ENCODE measurements at regions of chr6 and their contacts with region 1.

Region 1: GRCh38 chr6:42547407-42548329 is 16.2 kb upstream of the UBR2 start:
- DNase-seq: peak; percentile 82 to 92 (median 84)
- ATAC-seq: peak; percentile 94 to 99 (median 99)
- H3K4me3 ChIP-seq: peak overlapping the region; percentile 13 to 76 (median 53)
- H3K27ac ChIP-seq: peak overlapping the region in 9 of 12 donors; percentile 31 to 73 (median 45)
- H3K4me1 ChIP-seq: peaks cover 0 to 14% (median 4%) of the 10 kb centered on the region in 12 donors
- H3K27me3 ChIP-seq: peaks cover 0 to 4% (median 0%) of the 10 kb centered on the region in 9 donors
- CTCF ChIP-seq: peak; percentile 96 to 100 (median 99)
- POLR2A ChIP-seq: peak in 1 of 2 donors; percentile 24

Region 2: GRCh38 chr6:42086046-42087035 is 461.3 kb before region 1 on chr6:
- intact Hi-C with region 1: loop called in 1 of 10 experiments (anchors 10 kb)
- DNase-seq: peak in 1 of 5 donors; percentile 54
- ATAC-seq: peak; percentile 43 to 63 (median 54)
- H3K4me3 ChIP-seq: no peak overlapping the region
- H3K27ac ChIP-seq: peak overlapping the region; percentile 26 to 93 (median 84)
- H3K4me1 ChIP-seq: peaks cover 0 to 43% (median 13%) of the 10 kb centered on the region in 12 donors
- H3K27me3 ChIP-seq: no peaks in the 10 kb centered on the region
- CTCF ChIP-seq: peak in 4 of 12 donors; percentile 12 to 36 (median 18)
- POLR2A ChIP-seq: no peak

Region 3: GRCh38 chr6:42217519-42218367 is 329.9 kb before region 1 on chr6 and contains the start of gene MRPS10:
- intact Hi-C with region 1: loop called in 3 of 10 experiments (anchors 5 to 10 kb)
- DNase-seq: peak; percentile 93 to 94 (median 93)
- ATAC-seq: peak; percentile 99 to 100 (median 100)
- H3K4me3 ChIP-seq: peak within 1 kb of the TSS; percentile 49 to 90 (median 80)
- H3K27ac ChIP-seq: peak within 1 kb of the TSS; percentile 53 to 87 (median 80)
- H3K4me1 ChIP-seq: peaks cover 0 to 23% (median 12%) of the 10 kb centered on the region in 12 donors
- H3K27me3 ChIP-seq: no peaks in the 10 kb centered on the region
- CTCF ChIP-seq: peak in 1 of 12 donors; percentile 22
- POLR2A ChIP-seq: peak in 1 of 2 donors; percentile 62
- total RNA-seq, gene MRPS10: 47.5 to 73.5 (median 57.3) TPM

Region 4: GRCh38 chr6:42224222-42224989 is 323.3 kb before region 1 on chr6:
- intact Hi-C with region 1: loop called in 3 of 10 experiments (anchors 5 to 10 kb)
- DNase-seq: no peak
- ATAC-seq: no peak
- H3K4me3 ChIP-seq: no peak overlapping the region
- H3K27ac ChIP-seq: no peak overlapping the region
- H3K4me1 ChIP-seq: peaks cover 0 to 11% (median 0%) of the 10 kb centered on the region in 12 donors
- H3K27me3 ChIP-seq: no peaks in the 10 kb centered on the region
- CTCF ChIP-seq: no peak
- POLR2A ChIP-seq: no peak

Region 5: DNA sequence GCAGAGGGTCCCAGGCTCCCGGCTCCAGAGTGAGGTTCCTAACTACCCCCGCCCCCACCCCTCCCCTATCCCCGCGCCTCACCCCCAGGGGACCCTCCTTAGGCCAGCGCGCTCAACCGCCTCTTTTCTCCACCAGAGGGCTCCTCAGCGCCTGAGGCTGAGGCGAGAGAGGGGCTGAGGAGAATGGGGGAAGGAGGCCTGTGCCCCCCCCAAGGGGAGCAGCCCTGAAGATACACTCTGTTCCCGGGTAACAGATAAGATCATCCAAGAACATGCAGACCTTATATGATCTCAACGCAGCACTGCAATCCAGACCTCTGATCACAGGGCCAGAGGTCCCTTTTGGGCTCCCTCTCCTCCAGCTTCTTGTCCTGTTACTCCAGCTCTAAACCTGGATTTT is 286.7 kb before region 1 on chr6:
- intact Hi-C with region 1: loop called in 9 of 10 experiments (anchors 1 to 5 kb)
- DNase-seq: no peak
- ATAC-seq: peak; percentile 34 to 79 (median 69)
- H3K4me3 ChIP-seq: peak overlapping the region in 2 of 12 donors; percentile 7 to 13
- H3K27ac ChIP-seq: peak overlapping the region in 4 of 12 donors; percentile 6 to 25 (median 14)
- H3K4me1 ChIP-seq: peaks cover 0 to 48% (median 13%) of the 10 kb centered on the region in 12 donors
- H3K27me3 ChIP-seq: no peaks in the 10 kb centered on the region
- CTCF ChIP-seq: peak; percentile 33 to 64 (median 52)
- POLR2A ChIP-seq: no peak

Region 6: DNA sequence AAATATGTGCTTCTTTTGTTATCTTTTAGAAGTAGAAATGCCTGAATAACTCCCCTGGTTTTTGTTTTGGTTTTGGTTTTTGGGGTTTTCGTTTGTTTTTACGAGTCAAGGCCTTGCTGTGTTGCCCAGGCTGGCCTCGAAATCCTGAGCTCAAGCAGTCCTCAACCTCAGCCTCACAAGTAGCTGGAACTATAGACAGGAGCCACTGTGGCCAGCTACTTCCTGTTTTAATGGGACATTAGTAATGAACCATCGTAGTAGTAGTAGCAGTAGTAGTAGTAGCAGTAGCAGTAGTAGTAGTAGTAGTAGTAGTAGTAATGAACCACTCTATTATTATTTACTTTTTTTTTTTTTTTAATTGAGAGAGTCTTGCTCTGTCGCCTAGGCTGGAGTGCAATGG is 82.2 kb after region 1 on chr6:
- intact Hi-C with region 1: no loop called
- DNase-seq: no peak
- ATAC-seq: no peak
- H3K4me3 ChIP-seq: no peak overlapping the region
- H3K27ac ChIP-seq: peak overlapping the region in 1 of 12 donors; percentile 4
- H3K4me1 ChIP-seq: peaks cover 0 to 13% (median 1%) of the 10 kb centered on the region in 12 donors
- H3K27me3 ChIP-seq: no peaks in the 10 kb centered on the region
- CTCF ChIP-seq: no peak
- POLR2A ChIP-seq: no peak